AG04450 (cell line): ENCODE measurements at regions of chr9 and their contacts with region 1.

Region 1: DNA sequence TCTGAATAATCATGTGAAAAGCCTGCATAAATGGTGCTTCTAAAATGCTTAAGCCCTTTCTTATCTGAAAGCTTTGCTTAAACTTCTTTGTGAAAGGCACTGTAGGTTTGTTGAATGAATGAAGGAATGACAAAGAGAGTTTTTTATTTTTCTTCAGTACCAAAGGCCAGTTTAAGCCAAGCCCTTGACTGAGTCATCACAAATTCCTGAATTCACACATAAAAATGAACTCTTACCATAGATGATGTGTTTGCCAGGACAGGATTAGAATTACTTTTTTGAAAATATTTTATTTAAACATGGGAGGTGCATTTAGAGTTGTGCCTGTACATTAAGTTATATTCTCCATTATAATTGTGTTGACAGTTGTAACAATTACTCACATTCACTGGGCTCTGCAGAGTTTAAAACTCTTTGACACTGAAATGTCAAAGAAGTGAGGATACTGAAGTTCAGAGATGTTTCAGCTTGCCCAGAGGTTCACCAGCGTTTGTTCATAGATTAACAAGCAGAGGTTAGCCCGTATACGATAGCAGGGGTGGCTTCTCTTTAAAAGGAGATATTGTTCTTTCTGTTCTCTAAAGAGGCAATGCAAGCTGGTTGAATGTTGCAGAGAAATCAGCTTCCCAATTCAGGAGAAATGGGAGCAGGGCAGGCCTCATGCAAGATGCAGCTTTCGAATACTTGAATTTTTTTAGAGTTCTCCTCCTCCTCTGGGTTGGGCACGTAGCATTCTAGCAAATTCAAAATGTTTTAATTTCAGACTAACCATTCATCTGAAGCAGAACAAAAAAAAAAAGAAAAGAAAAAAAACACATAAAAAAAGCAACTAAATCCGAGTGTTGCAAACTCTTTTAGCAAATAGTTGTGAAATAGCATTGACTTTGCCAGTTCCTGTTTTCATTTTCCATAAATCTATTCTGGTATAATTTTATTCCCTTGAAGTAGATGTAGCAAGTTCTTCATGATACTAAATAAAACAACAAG is 358.7 kb upstream of the KLF4 start:
- DNase-seq: no peak
- H3K4me3 ChIP-seq: no peak overlapping the region
- H3K27ac ChIP-seq: no peak overlapping the region
- H3K27me3 ChIP-seq: no peaks in the 10 kb centered on the region
- CTCF ChIP-seq: no peak

Region 2: GRCh38 chr9:106692434-106692833 is 1155.8 kb before region 1 on chr9:
- CTCF ChIA-PET with region 1: interaction called, 11 read pairs
- POLR2A ChIA-PET with region 1: no interaction called
- DNase-seq: no peak
- H3K4me3 ChIP-seq: no peak overlapping the region
- H3K27ac ChIP-seq: no peak overlapping the region
- H3K27me3 ChIP-seq: no peaks in the 10 kb centered on the region
- CTCF ChIP-seq: no peak

Region 3: GRCh38 chr9:107667231-107668070 is 180.8 kb before region 1 on chr9:
- CTCF ChIA-PET with region 1: no interaction called
- POLR2A ChIA-PET with region 1: no interaction called
- DNase-seq: no peak
- H3K4me3 ChIP-seq: no peak overlapping the region
- H3K27ac ChIP-seq: no peak overlapping the region
- H3K27me3 ChIP-seq: no peaks in the 10 kb centered on the region
- CTCF ChIP-seq: no peak